ENCODE measurements at regions of chr17 and their contacts with region 1.

Region 1: GRCh38 chr17:2940352-2940751 is 123.1 kb downstream of the OR1D5 start:
- DNase-seq: peak; percentile 47 to 88 (median 77)
- ATAC-seq: peak; percentile 95 to 98 (median 97)
- H3K4me3 ChIP-seq: peak overlapping the region in 3 of 12 donors; percentile 4 to 19 (median 6)
- H3K27ac ChIP-seq: peak overlapping the region; percentile 25 to 85 (median 60)
- H3K4me1 ChIP-seq: peaks cover 0 to 25% (median 0%) of the 10 kb centered on the region in 12 donors
- H3K27me3 ChIP-seq: no peaks in the 10 kb centered on the region
- CTCF ChIP-seq: no peak
- POLR2A ChIP-seq: no peak

Region 2: DNA sequence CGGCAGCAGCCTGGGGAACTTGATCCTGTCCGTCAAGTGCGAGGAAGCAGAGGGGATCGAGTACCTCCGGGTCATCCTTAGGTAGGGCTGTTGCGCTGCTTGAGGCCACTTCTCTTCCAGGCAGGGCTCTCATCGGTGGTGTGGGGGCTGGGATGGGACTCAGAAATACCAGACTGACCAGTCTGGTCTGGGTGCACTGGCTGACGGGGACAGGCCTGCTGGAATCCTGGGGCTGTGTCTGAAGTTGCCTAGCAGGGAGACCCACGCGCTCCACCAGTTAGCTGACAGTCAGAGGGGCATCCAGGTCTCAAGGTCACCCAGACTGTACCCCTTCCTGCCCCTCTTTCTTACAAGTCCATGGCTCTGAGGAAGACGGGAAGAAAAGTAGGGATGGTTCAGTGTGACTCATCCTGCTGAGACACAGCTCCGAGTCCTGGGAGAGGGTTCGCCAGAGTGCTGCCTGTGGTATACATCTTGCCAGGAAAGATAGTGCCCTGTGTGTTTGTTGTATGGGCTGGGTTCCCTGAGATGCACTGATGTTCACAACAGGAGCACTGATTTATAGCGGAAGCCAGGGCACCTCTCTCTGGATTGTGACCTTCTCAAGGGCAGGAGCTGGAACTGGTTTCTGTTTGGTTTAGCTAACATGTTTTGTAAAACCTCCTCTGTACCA is 25.3 kb after region 1 on chr17:
- intact Hi-C with region 1: loop called in 1 of 10 experiments (anchors 2 kb)
- DNase-seq: no peak
- ATAC-seq: peak; percentile 29 to 71 (median 62)
- H3K4me3 ChIP-seq: no peak overlapping the region
- H3K27ac ChIP-seq: peak overlapping the region in 10 of 12 donors; percentile 5 to 82 (median 56)
- H3K4me1 ChIP-seq: peaks cover 0 to 22% (median 6%) of the 10 kb centered on the region in 12 donors
- H3K27me3 ChIP-seq: no peaks in the 10 kb centered on the region
- CTCF ChIP-seq: no peak
- POLR2A ChIP-seq: no peak

Region 3: GRCh38 chr17:2982854-2983253 is 42.5 kb after region 1 on chr17:
- intact Hi-C with region 1: loop called in 2 of 10 experiments (anchors 5 kb)
- DNase-seq: peak; percentile 63 to 89 (median 82)
- ATAC-seq: peak; percentile 98 to 99 (median 99)
- H3K4me3 ChIP-seq: peak overlapping the region in 2 of 12 donors; percentile 9 to 19
- H3K27ac ChIP-seq: peak overlapping the region in 11 of 12 donors; percentile 6 to 72 (median 33)
- H3K4me1 ChIP-seq: peaks cover 0 to 11% (median 1%) of the 10 kb centered on the region in 12 donors
- H3K27me3 ChIP-seq: no peaks in the 10 kb centered on the region
- CTCF ChIP-seq: peak in 9 of 12 donors; percentile 25 to 62 (median 40)
- POLR2A ChIP-seq: no peak

Region 4: GRCh38 chr17:3012926-3013581 is 72.7 kb after region 1 on chr17:
- intact Hi-C with region 1: loop called in 3 of 10 experiments (anchors 5 to 10 kb)
- DNase-seq: peak; percentile 61 to 72 (median 62)
- ATAC-seq: peak; percentile 76 to 90 (median 87)
- H3K4me3 ChIP-seq: no peak overlapping the region
- H3K27ac ChIP-seq: no peak overlapping the region
- H3K4me1 ChIP-seq: peaks cover 0 to 4% (median 0%) of the 10 kb centered on the region in 12 donors
- H3K27me3 ChIP-seq: no peaks in the 10 kb centered on the region
- CTCF ChIP-seq: peak; percentile 66 to 87 (median 82)
- POLR2A ChIP-seq: no peak

Measured in heart left ventricle (tissue), 16 donors.